ENCODE measurements at regions of chr1 and their contacts with region 1.

Region 1: DNA sequence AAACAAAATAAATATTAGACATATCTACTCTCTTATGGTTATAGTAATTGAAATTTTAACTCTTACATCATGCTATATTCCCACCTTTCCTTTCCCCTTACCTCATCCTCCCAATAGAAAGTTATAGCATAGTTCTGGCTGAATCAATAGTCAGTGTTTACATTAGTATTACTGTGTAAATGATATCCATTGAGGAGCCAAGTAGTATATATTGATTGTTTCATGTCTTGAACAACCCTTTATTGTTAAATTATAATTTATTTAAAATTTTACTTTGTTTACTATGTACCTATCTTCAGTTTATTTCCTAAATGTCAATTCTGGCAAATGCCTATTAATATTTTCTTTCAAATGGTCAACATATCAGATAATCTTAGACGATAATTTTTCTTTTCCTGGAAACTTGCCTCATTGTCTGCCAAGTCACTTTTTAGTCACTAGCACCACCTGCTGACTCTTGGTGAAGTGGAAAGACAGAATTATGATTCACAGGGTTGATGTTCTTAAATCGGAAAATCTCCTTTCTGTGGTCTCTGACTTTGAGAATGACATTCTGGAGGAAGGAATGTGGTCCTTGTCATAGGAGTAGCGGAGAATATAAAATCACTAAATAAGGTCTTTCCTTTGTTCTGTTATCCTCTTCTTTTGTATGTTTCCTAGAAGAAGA is 8.7 kb downstream of the HJV start:
- DNase-seq: no peak
- H3K4me3 ChIP-seq: no peak overlapping the region
- H3K27ac ChIP-seq: no peak overlapping the region
- H3K4me1 ChIP-seq: peaks cover 11 to 29% (median 24%) of the 10 kb centered on the region in 4 donors
- H3K27me3 ChIP-seq: no peaks in the 10 kb centered on the region
- CTCF ChIP-seq: peak; percentile 69 to 91 (median 78)
- EP300 ChIP-seq: no peak
- POLR2A ChIP-seq: no peak

Region 2: DNA sequence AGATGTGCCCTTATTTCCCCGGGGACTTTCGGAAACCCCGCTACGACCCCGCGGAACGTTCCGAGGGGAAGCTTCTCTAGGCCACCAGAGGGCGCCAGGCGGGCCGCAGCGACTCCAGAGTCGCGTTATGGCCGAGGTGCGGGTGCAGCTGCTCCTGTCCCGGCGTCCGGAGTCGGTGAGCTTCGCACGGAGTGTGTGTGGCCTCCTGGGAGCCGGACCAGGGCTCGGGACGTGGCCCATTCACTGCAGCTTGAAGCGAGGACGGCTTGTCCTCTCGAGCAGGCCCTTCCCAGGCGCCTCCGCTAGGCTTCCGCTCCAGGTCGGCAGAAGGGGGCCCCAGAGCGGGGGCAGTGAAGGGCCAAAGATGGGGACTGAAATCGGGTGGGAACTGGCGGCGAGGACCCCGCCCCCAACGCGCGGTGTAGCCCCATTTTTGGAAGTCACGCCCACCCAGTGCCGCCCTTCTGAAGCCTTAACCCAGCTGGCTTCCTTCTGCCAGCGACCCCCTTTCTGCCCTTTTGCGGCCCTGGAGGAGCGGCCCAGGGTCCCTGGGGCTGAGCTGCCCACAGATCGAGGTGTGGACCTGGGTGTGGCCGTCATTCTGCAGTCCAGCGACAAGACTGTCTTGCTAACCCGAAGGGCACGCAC is 167.2 kb before region 1 on chr1 and contains the start of gene NUDT17:
- intact Hi-C with region 1: loop called (anchors 1 kb)
- DNase-seq: no peak
- H3K4me3 ChIP-seq: peak within 1 kb of the TSS; percentile 57 to 62 (median 58)
- H3K27ac ChIP-seq: peak within 1 kb of the TSS; percentile 69 to 80 (median 76)
- H3K4me1 ChIP-seq: peaks cover 10 to 22% (median 18%) of the 10 kb centered on the region in 4 donors
- H3K27me3 ChIP-seq: no peaks in the 10 kb centered on the region
- CTCF ChIP-seq: peak; percentile 88 to 96 (median 91)
- EP300 ChIP-seq: no peak
- POLR2A ChIP-seq: no peak
- total RNA-seq, gene NUDT17: 1.2 to 3.6 (median 1.6) TPM

Region 3: DNA sequence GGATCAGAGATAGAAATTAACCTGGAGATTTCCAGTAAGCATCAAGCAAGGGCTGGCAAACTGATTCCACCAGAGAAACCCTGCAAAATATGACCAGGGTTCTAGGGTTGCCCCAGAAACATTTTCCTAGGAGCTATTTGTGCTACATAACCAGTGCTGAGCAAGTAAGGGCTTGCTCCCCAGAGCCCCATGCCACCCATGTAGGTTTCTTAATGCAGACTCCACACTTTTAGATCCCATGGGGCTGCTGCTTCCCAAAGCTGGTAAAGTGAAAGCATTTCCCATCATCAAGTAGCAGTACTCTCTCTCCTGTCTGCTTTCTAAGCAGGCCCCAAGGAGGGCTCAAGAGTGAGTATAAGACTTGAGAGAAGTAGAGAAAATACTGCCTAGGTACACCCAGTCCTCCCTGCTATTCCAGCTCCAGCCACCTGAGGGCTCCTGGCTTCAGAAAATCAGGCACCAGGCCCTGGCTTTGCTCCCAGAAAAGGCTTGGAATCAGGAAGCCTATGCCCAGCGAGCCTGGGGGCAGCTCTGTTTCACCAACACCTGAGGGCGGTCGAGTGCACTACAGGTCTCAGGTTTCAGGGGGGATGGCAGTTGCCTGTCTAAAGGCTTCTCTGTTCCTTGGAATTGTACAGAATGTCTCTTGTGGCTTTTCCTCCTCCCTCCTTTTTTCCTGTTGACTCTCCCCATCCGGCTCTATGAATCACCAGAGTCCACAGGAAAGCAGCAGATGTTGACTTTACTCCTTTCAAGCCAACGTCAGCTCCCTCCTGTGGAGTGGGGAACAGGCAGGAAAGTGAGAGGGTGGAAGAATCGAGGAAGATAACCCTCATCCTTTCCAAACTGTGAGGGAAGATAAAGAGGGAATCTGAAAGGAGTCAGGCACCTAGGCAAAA is 121.0 kb before region 1 on chr1:
- intact Hi-C with region 1: loop called (anchors 1 kb)
- DNase-seq: peak; percentile 98
- H3K4me3 ChIP-seq: peak overlapping the region; percentile 17 to 42 (median 34)
- H3K27ac ChIP-seq: peak overlapping the region; percentile 76 to 84 (median 80)
- H3K4me1 ChIP-seq: peaks cover 21 to 25% (median 23%) of the 10 kb centered on the region in 4 donors
- H3K27me3 ChIP-seq: no peaks in the 10 kb centered on the region
- CTCF ChIP-seq: peak; percentile 89 to 100 (median 99)
- EP300 ChIP-seq: no peak
- POLR2A ChIP-seq: no peak

Region 4: GRCh38 chr1:145918144-145918992 is 94.5 kb before region 1 on chr1 and contains the start of gene PEX11B:
- intact Hi-C with region 1: loop called (anchors 5 kb)
- DNase-seq: peak; percentile 97
- H3K4me3 ChIP-seq: peak within 1 kb of the TSS; percentile 79 to 91 (median 80)
- H3K27ac ChIP-seq: peak within 1 kb of the TSS; percentile 82 to 93 (median 90)
- H3K4me1 ChIP-seq: peaks cover 20 to 32% (median 29%) of the 10 kb centered on the region in 4 donors
- H3K27me3 ChIP-seq: no peaks in the 10 kb centered on the region
- CTCF ChIP-seq: peak in 1 of 3 experiments; percentile 23
- EP300 ChIP-seq: no peak
- POLR2A ChIP-seq: peak; percentile 51
- total RNA-seq, gene PEX11B: 18.3 to 21.2 (median 20.0) TPM

Region 5: GRCh38 chr1:145978854-145979759 is 33.8 kb before region 1 on chr1:
- intact Hi-C with region 1: loop called (anchors 1 kb)
- DNase-seq: peak; percentile 99
- H3K4me3 ChIP-seq: peak overlapping the region; percentile 38 to 50 (median 41)
- H3K27ac ChIP-seq: peak overlapping the region; percentile 89 to 96 (median 93)
- H3K4me1 ChIP-seq: peaks cover 63 to 72% (median 70%) of the 10 kb centered on the region in 4 donors
- H3K27me3 ChIP-seq: no peaks in the 10 kb centered on the region
- CTCF ChIP-seq: peak; percentile 7 to 17 (median 12)
- EP300 ChIP-seq: peak; percentile 77
- POLR2A ChIP-seq: peak; percentile 6